Activated T-helper 2 cell treated with anti-CD3 and anti-CD28 coated beads, Interferon-gamma antibody, Interleukin-2, Interleukin-4, amounts not matched to agents 10 μg/mL and 5 μg/mL and 100 μg/mL, durations not matched to agents 14 hours and 24 hours and 36 hours (primary cell): ENCODE measurements at regions of chr5 and their contacts with region 1.

Region 1: DNA sequence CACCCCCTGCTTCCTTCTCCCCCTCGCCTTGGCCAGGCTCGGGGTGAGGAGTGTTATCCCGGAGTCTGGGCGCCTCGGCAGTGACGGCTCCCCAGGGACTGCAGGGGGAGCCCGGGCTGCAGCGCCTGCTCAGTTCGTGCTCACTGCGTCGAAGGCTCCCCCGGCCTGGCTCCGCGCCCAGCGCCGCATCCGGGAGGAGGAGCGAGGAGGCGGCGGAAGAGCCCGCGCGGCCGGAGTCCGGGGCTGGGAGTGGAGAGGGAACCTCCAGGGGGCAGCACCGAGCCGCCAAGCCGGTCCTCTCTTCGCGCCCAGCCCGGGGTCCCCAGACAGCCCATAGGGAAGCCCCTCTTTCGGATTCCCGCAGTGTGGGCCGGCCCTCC is 1.3 kb upstream of the EGR1 start:
- DNase-seq: peak; percentile 90
- H3K4me3 Mint-ChIP-seq: peak overlapping the region; percentile 85
- H3K27ac Mint-ChIP-seq: peak overlapping the region; percentile 92
- H3K4me1 Mint-ChIP-seq: peaks cover 48% of the 10 kb centered on the region
- H3K27me3 Mint-ChIP-seq: no peaks in the 10 kb centered on the region

Region 2: GRCh38 chr5:137914758-137915157 is 549.2 kb before region 1 on chr5:
- intact Hi-C with region 1: no loop called
- DNase-seq: no peak
- H3K4me3 Mint-ChIP-seq: no peak overlapping the region
- H3K27ac Mint-ChIP-seq: no peak overlapping the region
- H3K4me1 Mint-ChIP-seq: no peaks in the 10 kb centered on the region
- H3K27me3 Mint-ChIP-seq: peaks cover 5% of the 10 kb centered on the region

Region 3: DNA sequence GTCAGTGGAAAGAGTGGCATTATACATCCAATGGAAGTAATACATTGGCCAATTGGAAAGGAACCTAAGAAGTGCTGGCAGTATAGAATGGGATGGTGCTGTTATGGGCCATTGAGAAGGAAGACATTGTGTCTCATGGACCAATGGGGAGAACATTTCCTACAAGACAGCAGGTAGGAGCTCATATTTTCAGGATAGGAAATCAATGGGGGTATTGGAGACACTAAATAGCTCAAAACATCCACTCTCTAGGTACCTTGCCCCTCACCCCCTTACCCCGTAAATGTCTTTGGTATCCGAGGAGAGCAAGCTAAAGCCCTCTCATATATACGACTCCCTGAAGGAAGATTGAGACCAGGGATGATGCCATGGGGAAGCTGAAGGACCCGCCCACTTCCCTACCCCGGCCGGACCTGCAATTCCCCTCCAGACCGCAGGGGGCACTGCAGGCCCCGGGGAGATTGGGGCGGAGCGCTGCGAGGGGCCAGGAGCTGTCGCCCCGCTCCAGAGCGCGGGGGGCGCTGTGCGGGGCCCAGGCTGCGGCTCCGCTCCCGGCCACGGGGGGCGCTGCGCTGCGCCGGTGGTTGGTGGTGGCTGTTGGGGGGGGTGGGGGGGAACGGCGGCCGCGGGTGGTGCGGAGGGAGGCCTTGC is 111.8 kb before region 1 on chr5 and contains the start of gene KDM3B:
- intact Hi-C with region 1: loop called (anchors 1 kb)
- DNase-seq: peak; percentile 93
- H3K4me3 Mint-ChIP-seq: peak within 1 kb of the TSS; percentile 97
- H3K27ac Mint-ChIP-seq: peak within 1 kb of the TSS; percentile 94
- H3K4me1 Mint-ChIP-seq: peaks cover 37% of the 10 kb centered on the region
- H3K27me3 Mint-ChIP-seq: no peaks in the 10 kb centered on the region
- total RNA-seq, gene KDM3B: 52.8 and 54.5 TPM in 2 replicates

Region 4: GRCh38 chr5:138491669-138492559 is 27.9 kb after region 1 on chr5:
- intact Hi-C with region 1: loop called (anchors 1 kb)
- DNase-seq: peak; percentile 81
- H3K4me3 Mint-ChIP-seq: peak overlapping the region; percentile 91
- H3K27ac Mint-ChIP-seq: no peak overlapping the region
- H3K4me1 Mint-ChIP-seq: peaks cover 14% of the 10 kb centered on the region
- H3K27me3 Mint-ChIP-seq: peaks cover 21% of the 10 kb centered on the region

Region 5: GRCh38 chr5:139197710-139198669 is 734.0 kb after region 1 on chr5 and contains the start of gene SIL1:
- intact Hi-C with region 1: loop called (anchors 2 kb)
- DNase-seq: peak; percentile 93
- H3K4me3 Mint-ChIP-seq: peak within 1 kb of the TSS; percentile 92
- H3K27ac Mint-ChIP-seq: peak within 1 kb of the TSS; percentile 84
- H3K4me1 Mint-ChIP-seq: peaks cover 21% of the 10 kb centered on the region
- H3K27me3 Mint-ChIP-seq: no peaks in the 10 kb centered on the region
- total RNA-seq, gene SIL1: 31.1 and 37.8 TPM in 2 replicates